Vagina (tissue), 2 donors: ENCODE measurements at regions of chr3 and their contacts with region 1.

Region 1: DNA sequence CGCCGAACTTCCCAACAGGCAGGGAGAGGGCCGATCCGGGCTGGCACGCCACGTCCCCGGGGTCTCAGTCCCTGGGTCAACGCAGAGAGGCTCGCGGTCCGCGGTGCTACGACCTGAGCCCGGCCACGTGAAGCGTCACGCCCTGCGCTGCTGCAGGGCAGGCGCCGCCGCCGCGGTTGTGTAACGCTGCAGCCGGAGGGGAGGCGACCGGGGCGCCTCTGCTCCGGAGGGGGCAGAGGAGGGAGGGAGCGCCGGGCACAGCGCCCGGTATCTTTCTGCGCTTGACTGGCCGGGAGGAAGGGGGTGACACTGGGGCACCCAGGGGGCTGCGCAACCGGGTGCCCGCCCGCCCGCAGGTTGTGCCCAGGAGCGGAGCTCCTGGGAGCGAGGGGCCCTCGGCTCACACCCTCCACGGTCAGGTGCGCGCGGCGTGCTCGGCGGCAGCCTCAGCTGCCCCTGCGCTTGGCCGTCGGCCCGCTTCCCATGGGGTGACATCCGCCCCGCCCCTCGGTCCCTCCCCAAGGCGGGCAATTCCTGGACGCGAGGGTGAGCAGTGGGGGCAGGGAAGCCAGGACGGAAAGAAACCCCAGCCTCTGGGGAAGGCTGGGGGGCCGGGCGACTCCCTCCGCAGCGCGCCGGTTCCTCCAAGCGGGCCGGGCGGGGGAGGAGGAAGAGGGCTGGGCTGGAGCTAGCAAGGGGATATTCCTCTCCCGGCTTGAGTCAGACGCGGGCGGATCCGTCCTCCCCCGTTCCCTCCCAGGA is 852 bp upstream of the BHLHE40 start:
- DNase-seq: peak in 1 of 2 donors; percentile 99
- H3K4me3 ChIP-seq: peak overlapping the region; percentile 76 to 92
- H3K27ac ChIP-seq: peak overlapping the region; percentile 98
- H3K4me1 ChIP-seq: peaks cover 51% of the 10 kb centered on the region
- H3K27me3 ChIP-seq: no peaks in the 10 kb centered on the region
- CTCF ChIP-seq: no peak
- POLR2A ChIP-seq: peak in 1 of 2 donors; percentile 33

Region 2: DNA sequence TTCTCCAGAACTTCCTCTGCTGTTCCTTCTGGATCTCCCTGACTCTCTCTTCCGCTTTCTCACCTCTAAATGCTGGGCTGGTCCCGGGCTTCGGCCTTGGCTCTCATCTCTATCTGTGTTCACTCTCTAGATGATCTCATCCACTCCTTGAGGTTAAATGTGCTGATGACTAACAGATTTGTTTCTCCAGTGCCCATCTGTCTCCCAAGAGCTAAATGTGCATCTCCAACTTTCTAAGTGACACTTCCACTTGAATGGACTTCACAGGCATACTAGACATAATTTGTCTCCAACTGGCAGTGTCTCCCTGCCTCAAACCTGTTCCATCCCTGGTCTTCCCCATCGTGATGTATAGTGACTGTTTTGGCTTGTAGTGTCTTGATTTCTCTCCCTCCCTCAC is 389.9 kb before region 1 on chr3:
- intact Hi-C with region 1: no loop called
- DNase-seq: no peak
- H3K4me3 ChIP-seq: no peak overlapping the region
- H3K27ac ChIP-seq: no peak overlapping the region
- H3K4me1 ChIP-seq: peaks cover 43% of the 10 kb centered on the region
- H3K27me3 ChIP-seq: no peaks in the 10 kb centered on the region
- CTCF ChIP-seq: no peak
- POLR2A ChIP-seq: no peak

Region 3: GRCh38 chr3:4741404-4742307 is 236.7 kb before region 1 on chr3:
- intact Hi-C with region 1: loop called (anchors 5 kb)
- DNase-seq: peak in 1 of 2 donors; percentile 94
- H3K4me3 ChIP-seq: no peak overlapping the region
- H3K27ac ChIP-seq: peak overlapping the region; percentile 91
- H3K4me1 ChIP-seq: peaks cover 63% of the 10 kb centered on the region
- H3K27me3 ChIP-seq: no peaks in the 10 kb centered on the region
- CTCF ChIP-seq: no peak
- POLR2A ChIP-seq: no peak

Region 4: GRCh38 chr3:4826237-4827100 is 151.9 kb before region 1 on chr3:
- intact Hi-C with region 1: loop called (anchors 5 kb)
- DNase-seq: no peak
- H3K4me3 ChIP-seq: no peak overlapping the region
- H3K27ac ChIP-seq: peak overlapping the region; percentile 79
- H3K4me1 ChIP-seq: peaks cover 75% of the 10 kb centered on the region
- H3K27me3 ChIP-seq: no peaks in the 10 kb centered on the region
- CTCF ChIP-seq: no peak
- POLR2A ChIP-seq: no peak

Region 5: GRCh38 chr3:5026331-5027218 is 48.2 kb after region 1 on chr3:
- intact Hi-C with region 1: loop called (anchors 2 kb)
- DNase-seq: no peak
- H3K4me3 ChIP-seq: peak overlapping the region; percentile 45 to 52
- H3K27ac ChIP-seq: peak overlapping the region; percentile 78
- H3K4me1 ChIP-seq: peaks cover 21% of the 10 kb centered on the region
- H3K27me3 ChIP-seq: no peaks in the 10 kb centered on the region
- CTCF ChIP-seq: peak in 2 of 3 experiments; percentile 56 to 73
- POLR2A ChIP-seq: no peak

Region 6: DNA sequence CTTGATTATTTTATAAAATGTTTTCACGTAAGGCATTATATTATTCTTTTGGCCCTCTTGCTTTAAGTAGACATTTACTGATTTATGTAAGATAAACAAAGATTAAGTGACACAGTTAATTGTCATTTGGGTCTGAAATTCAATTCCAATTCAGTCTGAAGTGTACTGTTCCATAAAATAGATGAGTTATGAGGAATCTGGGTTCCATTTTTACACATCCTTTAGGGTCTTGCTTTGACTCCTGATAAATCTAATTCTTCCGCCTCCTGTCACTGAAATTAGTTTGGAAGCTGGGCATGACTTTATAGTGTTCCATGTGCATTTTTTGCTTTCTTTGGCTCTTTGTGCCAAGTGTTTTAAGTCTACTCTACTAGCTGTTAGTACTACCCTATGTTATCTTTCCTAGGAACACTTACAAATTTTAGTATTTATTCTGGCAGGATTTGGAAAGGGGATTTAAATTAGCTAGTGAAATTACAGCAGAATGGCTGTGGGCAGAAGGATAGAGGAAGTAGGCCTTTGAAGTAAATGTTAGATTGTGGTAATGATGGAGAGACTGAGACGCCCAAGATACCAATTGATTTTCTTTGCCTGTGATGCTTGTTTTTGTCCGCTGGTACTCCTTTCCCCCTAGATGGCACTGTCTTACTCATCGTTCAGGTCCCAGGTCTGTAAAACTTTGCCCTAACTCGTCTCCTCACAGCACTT is 158.0 kb after region 1 on chr3:
- intact Hi-C with region 1: no loop called
- DNase-seq: no peak
- H3K4me3 ChIP-seq: no peak overlapping the region
- H3K27ac ChIP-seq: no peak overlapping the region
- H3K4me1 ChIP-seq: peaks cover 87% of the 10 kb centered on the region
- H3K27me3 ChIP-seq: no peaks in the 10 kb centered on the region
- CTCF ChIP-seq: no peak
- POLR2A ChIP-seq: no peak